RWPE1 (cell line): ENCODE measurements at regions of chr7 and their contacts with region 1.

Region 1: DNA sequence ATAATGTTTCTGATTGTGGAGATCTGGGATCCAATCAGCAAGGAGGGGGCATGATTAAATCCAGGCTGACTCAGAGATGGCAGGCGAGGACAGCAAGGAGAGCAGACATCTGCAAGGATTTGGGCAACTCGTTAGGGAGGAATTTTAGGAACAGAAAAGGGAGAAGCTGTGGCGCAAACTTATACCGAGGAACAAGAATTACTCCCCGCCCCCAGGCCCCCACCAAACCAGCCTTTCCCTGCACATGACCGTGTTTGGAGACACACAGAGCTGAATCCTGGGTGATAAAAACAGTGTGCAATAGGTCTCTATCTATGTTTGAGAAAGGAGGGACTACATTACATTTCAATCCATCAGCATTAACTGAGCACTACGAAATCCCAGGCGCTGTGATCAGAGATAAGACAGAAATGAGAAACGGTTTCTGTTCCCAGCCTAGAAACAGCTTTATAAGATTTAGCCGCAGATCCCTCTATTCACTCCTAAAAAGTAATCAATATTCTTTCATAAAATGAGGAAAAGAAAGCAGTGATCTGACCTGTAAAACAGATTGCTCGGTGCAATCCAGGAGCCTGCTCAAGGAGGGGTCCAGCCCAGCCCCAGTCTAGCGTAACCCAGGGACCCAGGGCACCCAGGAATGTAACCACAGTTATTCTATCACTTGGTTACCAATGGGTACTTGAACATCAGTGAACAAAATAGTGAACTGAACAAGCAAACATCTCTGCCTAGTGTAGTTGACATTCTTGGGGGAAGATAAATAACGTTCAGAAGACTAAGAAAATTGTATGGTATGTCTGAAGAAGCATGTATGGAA is 37.2 kb upstream of the RAPGEF5 start:
- DNase-seq: no peak
- H3K27ac ChIP-seq: no peak overlapping the region
- CTCF ChIP-seq: no peak

Region 2: GRCh38 chr7:22214000-22214399 is 180.1 kb before region 1 on chr7:
- CTCF ChIA-PET with region 1: no interaction called
- POLR2A ChIA-PET with region 1: interaction called, 10 read pairs
- DNase-seq: no peak
- H3K27ac ChIP-seq: no peak overlapping the region
- CTCF ChIP-seq: no peak

Region 3: GRCh38 chr7:22238354-22239311 is 155.5 kb before region 1 on chr7:
- CTCF ChIA-PET with region 1: no interaction called
- POLR2A ChIA-PET with region 1: no interaction called
- DNase-seq: peak; percentile 70
- H3K27ac ChIP-seq: peak overlapping the region; percentile 61
- CTCF ChIP-seq: no peak